Mammary epithelial cell (primary cell): ENCODE measurements at regions of chr18 and their contacts with region 1.

Region 1: DNA sequence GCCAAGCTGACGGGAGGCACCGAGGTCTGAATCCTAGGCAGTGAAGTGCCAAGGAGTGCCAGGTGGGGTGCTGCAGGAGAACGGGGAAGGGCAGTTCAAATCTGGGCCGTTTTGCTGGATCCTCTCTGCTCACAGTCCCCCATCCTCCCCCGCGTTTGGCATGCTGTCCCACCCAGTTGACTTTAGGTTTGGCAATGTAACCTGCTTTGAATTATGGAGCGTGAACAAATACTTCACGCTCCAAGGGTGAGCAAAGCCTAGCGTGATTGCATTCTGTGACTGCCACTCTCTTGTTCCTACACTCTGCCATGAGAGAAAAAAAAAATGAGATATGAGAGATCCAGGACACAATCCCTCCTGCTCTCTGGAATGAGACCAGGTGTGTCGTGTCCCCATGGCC is 381.9 kb downstream of the ZNF516 start:
- DNase-seq: no peak
- H3K4me3 ChIP-seq: no peak overlapping the region
- H3K27ac ChIP-seq: no peak overlapping the region
- H3K4me1 ChIP-seq: no peaks in the 10 kb centered on the region
- H3K27me3 ChIP-seq: no peaks in the 10 kb centered on the region
- CTCF ChIP-seq: no peak

Region 2: DNA sequence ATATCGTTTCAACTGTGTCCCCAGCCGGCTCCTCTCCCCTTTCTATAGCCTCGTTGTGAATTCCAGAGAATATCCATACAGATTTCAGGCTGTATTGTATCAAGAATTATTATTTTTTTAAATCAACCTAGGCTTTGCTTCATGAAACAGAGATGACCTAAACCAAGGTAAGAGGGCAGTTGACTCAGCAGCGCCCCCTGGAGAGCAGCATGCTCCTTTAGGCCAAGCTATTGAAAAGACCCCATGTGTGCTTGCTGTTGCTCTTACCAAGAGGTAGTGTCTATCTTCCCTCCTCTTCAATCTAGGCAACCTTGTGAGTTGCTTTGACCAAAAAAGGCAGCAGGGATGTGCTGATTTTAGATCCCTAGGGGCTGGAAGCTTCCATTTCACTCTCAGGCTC is 258.9 kb before region 1 on chr18:
- CTCF ChIA-PET with region 1: no interaction called
- dilution Hi-C with region 1: no loop called
- in situ Hi-C with region 1: no loop called
- intact Hi-C with region 1: no loop called
- DNase-seq: no peak
- H3K4me3 ChIP-seq: no peak overlapping the region
- H3K27ac ChIP-seq: no peak overlapping the region
- H3K4me1 ChIP-seq: no peaks in the 10 kb centered on the region
- H3K27me3 ChIP-seq: no peaks in the 10 kb centered on the region
- CTCF ChIP-seq: peak; percentile 25 to 40

Region 3: DNA sequence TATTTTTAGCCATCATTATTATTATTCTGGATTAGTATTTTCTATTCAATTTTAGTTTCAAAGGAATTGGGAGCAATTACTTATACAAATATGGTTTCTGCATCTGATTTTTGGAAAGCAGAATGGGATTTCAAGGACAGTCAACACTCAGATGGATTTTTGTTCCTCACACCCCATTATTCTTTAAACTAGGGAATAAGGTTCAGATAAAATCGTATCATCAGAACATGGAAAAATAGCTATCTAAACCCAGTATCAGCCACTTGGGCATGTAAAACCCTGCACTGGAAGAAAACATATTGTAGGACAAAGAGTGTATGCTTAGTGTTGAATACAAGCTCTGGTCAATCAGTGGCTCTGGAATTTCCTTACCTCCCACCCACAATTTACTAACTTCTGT is 70.6 kb before region 1 on chr18:
- CTCF ChIA-PET with region 1: no interaction called
- dilution Hi-C with region 1: no loop called
- in situ Hi-C with region 1: no loop called
- intact Hi-C with region 1: no loop called
- DNase-seq: no peak
- H3K4me3 ChIP-seq: no peak overlapping the region
- H3K27ac ChIP-seq: no peak overlapping the region
- H3K4me1 ChIP-seq: no peaks in the 10 kb centered on the region
- H3K27me3 ChIP-seq: no peaks in the 10 kb centered on the region
- CTCF ChIP-seq: no peak

Region 4: DNA sequence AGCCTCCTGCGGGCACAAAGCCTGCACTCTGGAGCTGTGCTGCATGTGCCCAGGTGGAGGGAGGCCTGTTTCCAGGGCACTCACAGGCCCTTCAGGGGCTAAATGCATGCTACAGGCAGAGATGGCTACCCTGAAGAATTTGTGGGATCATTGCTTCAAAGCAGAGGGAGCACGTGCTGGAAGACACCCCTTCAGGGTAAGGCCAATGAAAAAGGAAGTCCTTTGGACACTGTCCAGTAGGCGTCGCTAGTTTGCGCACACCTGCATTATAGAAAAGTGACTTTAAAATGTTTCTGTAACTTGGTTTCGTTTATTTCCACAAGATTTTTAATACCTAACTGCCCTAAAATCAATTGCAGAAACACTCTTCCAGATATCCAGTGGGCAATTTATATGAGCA is 56.6 kb after region 1 on chr18:
- CTCF ChIA-PET with region 1: no interaction called
- dilution Hi-C with region 1: no loop called
- in situ Hi-C with region 1: no loop called
- intact Hi-C with region 1: loop called (anchors 10 kb)
- DNase-seq: no peak
- H3K4me3 ChIP-seq: no peak overlapping the region
- H3K27ac ChIP-seq: no peak overlapping the region
- H3K4me1 ChIP-seq: peaks cover 10% of the 10 kb centered on the region
- H3K27me3 ChIP-seq: no peaks in the 10 kb centered on the region
- CTCF ChIP-seq: no peak